ENCODE measurements at regions of chr12 and their contacts with region 1.

Region 1: GRCh38 chr12:89461649-89462612 is 62.7 kb downstream of the GALNT4 start:
- DNase-seq: peak; percentile 82
- ATAC-seq: peak; percentile 87
- H3K4me3 ChIP-seq: peak overlapping the region; percentile 20; the same call in 1 of the 2 replicates
- H3K27ac ChIP-seq: peak overlapping the region; percentile 69; the same call in 1 of the 2 replicates
- H3K4me1 ChIP-seq: peaks cover 6% of the 10 kb centered on the region
- H3K27me3 ChIP-seq: no peaks in the 10 kb centered on the region
- CTCF ChIP-seq: peak; percentile 75
- POLR2A ChIP-seq: peak; percentile 41; the same call in 1 of the 2 replicates
- RAD21 ChIP-seq: peak; percentile 90

Region 2: GRCh38 chr12:89019408-89020120 is 442.4 kb before region 1 on chr12:
- CTCF ChIA-PET with region 1: interaction called, 10 read pairs
- POLR2A ChIA-PET with region 1: no interaction called
- dilution Hi-C with region 1: no loop called
- in situ Hi-C with region 1: loop called (anchors 5 kb)
- intact Hi-C with region 1: loop called (anchors 1 kb)
- DNase-seq: peak; percentile 88
- ATAC-seq: peak; percentile 97
- H3K4me3 ChIP-seq: peak overlapping the region; percentile 28
- H3K27ac ChIP-seq: no peak overlapping the region; the same call in 1 of the 2 replicates
- H3K4me1 ChIP-seq: no peaks in the 10 kb centered on the region
- H3K27me3 ChIP-seq: no peaks in the 10 kb centered on the region
- CTCF ChIP-seq: peak; percentile 96
- POLR2A ChIP-seq: no peak; the same call in 1 of the 2 replicates
- RAD21 ChIP-seq: peak; percentile 95

Region 3: GRCh38 chr12:89040146-89040964 is 421.6 kb before region 1 on chr12:
- CTCF ChIA-PET with region 1: interaction called, 3 read pairs
- POLR2A ChIA-PET with region 1: no interaction called
- dilution Hi-C with region 1: loop called (anchors 25 kb)
- in situ Hi-C with region 1: no loop called
- intact Hi-C with region 1: no loop called
- DNase-seq: peak; percentile 44
- ATAC-seq: no peak
- H3K4me3 ChIP-seq: no peak overlapping the region
- H3K27ac ChIP-seq: no peak overlapping the region
- H3K4me1 ChIP-seq: no peaks in the 10 kb centered on the region
- H3K27me3 ChIP-seq: no peaks in the 10 kb centered on the region; the same call in 1 of the 2 replicates
- CTCF ChIP-seq: no peak
- POLR2A ChIP-seq: no peak
- RAD21 ChIP-seq: no peak

Region 4: DNA sequence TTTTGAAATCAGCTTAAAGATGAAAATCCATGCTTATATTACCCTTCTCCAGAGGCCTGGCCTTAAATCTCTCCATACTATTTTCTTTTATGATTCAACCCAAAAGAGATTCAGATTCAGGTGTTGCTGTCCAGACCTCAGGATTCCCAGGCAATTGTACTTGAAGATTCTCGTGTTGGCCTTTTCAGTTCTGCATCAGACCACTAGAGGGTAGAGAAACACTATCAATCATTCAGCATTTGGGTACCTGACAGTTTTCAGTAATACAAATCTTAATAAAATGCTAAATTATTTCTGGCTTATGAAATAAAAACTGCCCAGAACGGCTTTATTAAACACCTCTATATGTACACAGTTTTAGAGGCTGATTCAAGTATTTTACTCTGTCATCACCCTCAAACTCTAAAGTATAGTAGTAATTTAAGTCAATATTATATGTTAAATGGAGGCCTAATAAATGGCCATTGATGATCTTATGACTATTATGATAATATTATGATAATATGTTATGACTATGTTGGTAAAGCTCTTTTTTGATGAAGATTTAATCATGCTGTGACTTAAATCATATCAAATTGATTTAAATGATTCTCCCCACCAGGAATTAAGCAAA is 410.8 kb before region 1 on chr12:
- CTCF ChIA-PET with region 1: interaction called, 3 read pairs
- POLR2A ChIA-PET with region 1: no interaction called
- dilution Hi-C with region 1: loop called (anchors 25 kb)
- in situ Hi-C with region 1: loop called (anchors 10 kb)
- intact Hi-C with region 1: loop called (anchors 1 kb)
- DNase-seq: peak; percentile 78
- ATAC-seq: peak; percentile 63
- H3K4me3 ChIP-seq: no peak overlapping the region
- H3K27ac ChIP-seq: no peak overlapping the region
- H3K4me1 ChIP-seq: no peaks in the 10 kb centered on the region
- H3K27me3 ChIP-seq: no peaks in the 10 kb centered on the region
- CTCF ChIP-seq: peak; percentile 88
- POLR2A ChIP-seq: no peak
- RAD21 ChIP-seq: peak; percentile 90

Region 5: GRCh38 chr12:89162704-89163261 is 299.1 kb before region 1 on chr12:
- CTCF ChIA-PET with region 1: no interaction called
- POLR2A ChIA-PET with region 1: no interaction called
- dilution Hi-C with region 1: no loop called
- in situ Hi-C with region 1: no loop called
- intact Hi-C with region 1: loop called (anchors 5 kb)
- DNase-seq: peak; percentile 99
- ATAC-seq: peak; percentile 90
- H3K4me3 ChIP-seq: no peak overlapping the region
- H3K27ac ChIP-seq: peak overlapping the region; percentile 86; the same call in 1 of the 2 replicates
- H3K4me1 ChIP-seq: peaks cover 6% of the 10 kb centered on the region
- H3K27me3 ChIP-seq: no peaks in the 10 kb centered on the region
- CTCF ChIP-seq: no peak
- POLR2A ChIP-seq: no peak
- RAD21 ChIP-seq: no peak; the same call in 1 of the 2 replicates

Region 6: GRCh38 chr12:89825591-89826449 is 363.9 kb after region 1 on chr12:
- CTCF ChIA-PET with region 1: no interaction called
- POLR2A ChIA-PET with region 1: no interaction called
- dilution Hi-C with region 1: no loop called
- in situ Hi-C with region 1: no loop called
- intact Hi-C with region 1: no loop called
- DNase-seq: peak; percentile 4
- ATAC-seq: no peak
- H3K4me3 ChIP-seq: no peak overlapping the region
- H3K27ac ChIP-seq: no peak overlapping the region
- H3K4me1 ChIP-seq: no peaks in the 10 kb centered on the region
- H3K27me3 ChIP-seq: no peaks in the 10 kb centered on the region
- CTCF ChIP-seq: no peak
- POLR2A ChIP-seq: no peak
- RAD21 ChIP-seq: no peak